ENCODE measurements at regions of chr12 and their contacts with region 1.

Region 1: GRCh38 chr12:8032242-8033152 is at the start of gene FOXJ2:
- DNase-seq: peak; percentile 72
- H3K4me3 Mint-ChIP-seq: peak within 1 kb of the TSS; percentile 82
- H3K27ac Mint-ChIP-seq: peak within 1 kb of the TSS; percentile 86
- H3K4me1 Mint-ChIP-seq: peaks cover 51% of the 10 kb centered on the region
- H3K27me3 Mint-ChIP-seq: no peaks in the 10 kb centered on the region
- total RNA-seq, gene FOXJ2: 17.6 to 17.7 TPM

Region 2: DNA sequence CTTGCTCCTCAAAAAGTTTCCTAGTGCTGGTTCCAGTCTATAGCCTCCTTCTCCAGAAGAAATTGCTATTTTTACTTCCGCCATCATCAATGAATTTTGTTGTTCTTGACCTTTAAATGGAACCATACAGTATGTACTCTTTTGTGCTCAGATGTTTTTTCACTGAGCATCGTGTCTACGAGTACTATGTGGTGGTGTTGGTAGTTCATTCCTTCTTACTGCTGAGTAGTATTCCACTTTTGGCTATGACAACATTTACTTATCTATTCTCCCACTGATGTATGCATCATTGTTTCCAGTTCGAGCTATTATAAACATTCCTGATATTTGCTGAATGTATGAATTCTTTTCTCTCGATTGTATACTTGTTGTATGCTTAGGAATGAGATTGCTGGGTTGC is 188.4 kb before region 1 on chr12:
- CTCF ChIA-PET with region 1: no interaction called
- intact Hi-C with region 1: no loop called
- DNase-seq: no peak
- H3K4me3 Mint-ChIP-seq: no peak overlapping the region
- H3K27ac Mint-ChIP-seq: no peak overlapping the region
- H3K4me1 Mint-ChIP-seq: peaks cover 2% of the 10 kb centered on the region
- H3K27me3 Mint-ChIP-seq: peaks cover 3% of the 10 kb centered on the region

Region 3: DNA sequence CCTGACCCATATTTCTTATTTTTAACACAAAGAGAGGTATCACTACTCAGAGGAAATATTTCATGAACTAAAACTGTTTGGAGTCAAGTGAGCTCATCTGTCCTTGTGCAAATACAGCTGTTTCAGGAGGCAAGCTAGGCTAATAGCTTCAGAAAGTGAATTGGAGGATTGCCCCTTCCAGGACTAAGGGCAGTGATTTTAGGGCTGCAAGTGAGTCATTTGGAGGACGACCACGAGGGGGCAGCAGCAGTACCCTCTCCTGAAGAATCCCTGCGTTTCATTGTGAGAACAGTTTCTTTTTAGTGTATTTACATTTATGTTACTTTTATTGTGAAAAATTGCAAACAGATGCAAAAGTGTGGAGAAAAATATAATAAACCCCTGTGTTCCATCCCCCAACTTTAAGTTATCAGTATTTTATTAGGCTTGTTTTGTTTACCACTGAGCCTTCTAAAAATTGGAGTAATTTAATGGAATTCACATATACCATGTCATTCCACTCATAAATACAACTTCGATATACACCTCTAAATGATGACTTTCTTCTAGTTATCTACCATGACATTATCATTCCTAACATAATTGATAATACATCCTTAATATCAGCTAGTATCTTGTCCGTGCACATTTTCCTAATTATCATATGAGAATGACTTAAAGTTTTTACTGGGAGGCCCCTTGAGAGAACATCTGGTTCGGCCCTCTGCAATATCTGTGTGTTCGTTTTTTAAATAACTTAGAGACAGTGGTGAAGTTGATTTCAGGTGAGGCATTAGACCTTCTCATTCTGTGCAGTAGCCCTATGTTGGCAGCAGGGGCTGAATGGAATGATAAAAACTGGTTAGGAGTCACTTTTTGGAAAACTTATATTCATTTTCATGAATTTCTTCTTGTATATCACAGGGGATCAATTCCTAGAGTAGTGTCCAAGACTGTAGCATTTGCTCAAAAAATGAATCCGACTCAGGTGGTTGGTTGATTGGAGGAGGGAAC is 13.8 kb after region 1 on chr12:
- CTCF ChIA-PET with region 1: interaction called, 42 read pairs
- intact Hi-C with region 1: no loop called
- DNase-seq: peak; percentile 91
- H3K4me3 Mint-ChIP-seq: no peak overlapping the region
- H3K27ac Mint-ChIP-seq: no peak overlapping the region
- H3K4me1 Mint-ChIP-seq: peaks cover 18% of the 10 kb centered on the region
- H3K27me3 Mint-ChIP-seq: no peaks in the 10 kb centered on the region

Measured in activated naive CD4-positive, alpha-beta T cell treated with anti-CD3 and anti-CD28 coated beads for 36 hours (primary cell).